Heart left ventricle (tissue), 16 donors: ENCODE measurements at regions of chr7 and their contacts with region 1.

Region 1: GRCh38 chr7:69208848-69209247 is 389.4 kb upstream of the AUTS2 start:
- DNase-seq: no peak
- ATAC-seq: no peak
- H3K4me3 ChIP-seq: no peak overlapping the region
- H3K27ac ChIP-seq: no peak overlapping the region
- H3K4me1 ChIP-seq: no peaks in the 10 kb centered on the region
- H3K27me3 ChIP-seq: peaks cover 0 to 8% (median 0%) of the 10 kb centered on the region in 9 donors
- CTCF ChIP-seq: no peak
- POLR2A ChIP-seq: no peak

Region 2: DNA sequence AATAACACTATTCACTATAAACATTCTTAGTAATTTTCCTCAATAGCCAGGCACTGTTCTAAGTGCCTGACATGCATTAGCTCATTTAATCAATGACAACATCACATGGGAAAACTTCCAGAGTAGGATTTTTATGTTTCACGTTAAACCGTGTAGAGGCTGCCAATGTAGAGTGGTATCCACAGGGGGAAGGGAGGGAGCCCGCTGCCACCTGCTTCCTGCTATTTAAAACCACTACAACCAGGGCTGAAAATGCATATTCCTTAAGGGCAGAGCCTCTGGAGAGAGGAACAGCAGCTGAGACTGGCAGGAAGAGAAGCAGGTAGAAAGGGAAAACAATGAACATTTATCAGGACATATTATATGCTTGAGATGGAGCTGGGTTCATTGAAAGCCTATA is 294.8 kb before region 1 on chr7:
- intact Hi-C with region 1: no loop called
- DNase-seq: no peak
- ATAC-seq: no peak
- H3K4me3 ChIP-seq: no peak overlapping the region
- H3K27ac ChIP-seq: no peak overlapping the region
- H3K4me1 ChIP-seq: no peaks in the 10 kb centered on the region
- H3K27me3 ChIP-seq: peaks cover 0 to 15% (median 0%) of the 10 kb centered on the region in 9 donors
- CTCF ChIP-seq: no peak
- POLR2A ChIP-seq: no peak

Region 3: DNA sequence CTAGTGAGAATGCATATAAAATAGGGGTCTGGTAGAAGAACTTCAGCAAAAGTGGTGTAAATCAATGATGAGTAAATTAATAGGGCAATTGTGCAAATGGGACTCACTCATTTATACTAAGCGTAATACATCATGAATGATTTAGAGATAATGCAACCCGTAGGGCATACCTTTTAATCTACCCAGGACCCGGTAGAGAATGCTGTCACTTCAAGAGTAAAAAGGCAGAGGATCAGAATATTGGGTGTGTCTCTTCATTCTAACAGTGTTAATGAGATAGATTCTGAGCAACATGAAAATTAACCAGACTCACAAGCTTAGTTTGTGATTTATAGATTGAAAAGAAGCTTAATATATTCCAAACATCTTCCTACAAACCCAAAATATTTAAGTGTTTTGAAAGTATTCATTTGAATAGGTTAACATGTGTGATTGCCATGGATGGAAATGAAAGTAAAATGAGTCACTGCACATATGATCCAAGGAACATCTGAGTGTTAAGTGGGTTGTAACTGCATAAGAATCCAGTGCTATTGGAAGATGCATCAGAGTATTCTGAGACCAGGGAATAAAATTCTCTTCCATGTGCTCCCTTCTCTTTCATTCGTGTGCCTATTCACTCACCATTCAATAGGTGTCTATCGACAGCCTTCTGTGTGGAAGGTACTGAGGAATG is 1080.1 kb after region 1 on chr7:
- intact Hi-C with region 1: no loop called
- DNase-seq: no peak
- ATAC-seq: no peak
- H3K4me3 ChIP-seq: no peak overlapping the region
- H3K27ac ChIP-seq: no peak overlapping the region
- H3K4me1 ChIP-seq: no peaks in the 10 kb centered on the region
- H3K27me3 ChIP-seq: no peaks in the 10 kb centered on the region
- CTCF ChIP-seq: no peak
- POLR2A ChIP-seq: no peak

Region 4: DNA sequence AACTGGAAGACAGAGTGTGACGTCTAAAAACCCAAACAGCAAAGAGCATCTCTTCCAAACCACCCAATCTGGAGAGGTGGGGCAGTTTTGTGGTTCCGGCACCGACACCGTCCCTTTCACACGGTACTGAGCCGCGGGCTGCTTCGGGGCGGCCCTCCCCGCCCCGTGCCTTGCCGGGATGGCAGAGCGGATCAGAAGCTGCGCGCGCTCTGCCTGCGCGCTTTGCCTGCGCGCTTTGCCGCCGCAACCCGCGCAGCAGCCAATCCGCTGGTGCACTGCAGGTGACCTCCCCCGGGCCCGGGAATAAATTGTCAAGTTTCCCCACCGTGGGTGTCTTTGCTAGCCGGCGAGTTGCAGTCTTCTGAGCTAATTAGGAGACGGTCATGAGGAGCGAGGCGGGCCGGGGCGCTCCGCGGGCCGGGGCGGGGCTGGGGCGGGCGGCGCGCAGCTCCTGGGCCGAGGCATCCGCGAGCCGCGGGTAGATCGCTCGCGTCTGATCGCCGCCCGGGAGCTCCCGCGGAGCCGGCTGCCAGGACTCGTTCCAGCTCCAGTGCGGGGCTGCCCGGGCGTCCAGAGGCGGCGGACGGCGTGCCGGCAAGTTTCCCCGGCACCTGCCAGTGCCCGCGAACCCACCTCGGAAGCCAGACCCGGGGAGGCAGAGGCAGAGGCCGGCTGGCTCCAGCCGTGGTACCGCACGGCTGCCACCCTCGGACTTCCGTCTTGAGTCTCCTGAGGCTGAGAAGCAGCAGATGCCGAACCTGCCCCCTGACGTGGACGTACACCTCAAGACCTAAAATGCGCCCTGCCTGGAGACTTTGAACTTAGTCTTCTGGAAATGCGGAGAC is 1387.1 kb after region 1 on chr7:
- intact Hi-C with region 1: loop called in 1 of 10 experiments (anchors 10 kb)
- DNase-seq: peak in 1 of 5 donors; percentile 63
- ATAC-seq: peak in 2 of 4 donors; percentile 59 to 76
- H3K4me3 ChIP-seq: peak overlapping the region; percentile 7 to 49 (median 35)
- H3K27ac ChIP-seq: no peak overlapping the region
- H3K4me1 ChIP-seq: peaks cover 0 to 9% (median 0%) of the 10 kb centered on the region in 12 donors
- H3K27me3 ChIP-seq: peaks cover 0 to 7% (median 0%) of the 10 kb centered on the region in 9 donors
- CTCF ChIP-seq: no peak
- POLR2A ChIP-seq: no peak